Endothelial cell of umbilical vein (primary cell): ENCODE measurements at regions of chr1 and their contacts with region 1.

Region 1: DNA sequence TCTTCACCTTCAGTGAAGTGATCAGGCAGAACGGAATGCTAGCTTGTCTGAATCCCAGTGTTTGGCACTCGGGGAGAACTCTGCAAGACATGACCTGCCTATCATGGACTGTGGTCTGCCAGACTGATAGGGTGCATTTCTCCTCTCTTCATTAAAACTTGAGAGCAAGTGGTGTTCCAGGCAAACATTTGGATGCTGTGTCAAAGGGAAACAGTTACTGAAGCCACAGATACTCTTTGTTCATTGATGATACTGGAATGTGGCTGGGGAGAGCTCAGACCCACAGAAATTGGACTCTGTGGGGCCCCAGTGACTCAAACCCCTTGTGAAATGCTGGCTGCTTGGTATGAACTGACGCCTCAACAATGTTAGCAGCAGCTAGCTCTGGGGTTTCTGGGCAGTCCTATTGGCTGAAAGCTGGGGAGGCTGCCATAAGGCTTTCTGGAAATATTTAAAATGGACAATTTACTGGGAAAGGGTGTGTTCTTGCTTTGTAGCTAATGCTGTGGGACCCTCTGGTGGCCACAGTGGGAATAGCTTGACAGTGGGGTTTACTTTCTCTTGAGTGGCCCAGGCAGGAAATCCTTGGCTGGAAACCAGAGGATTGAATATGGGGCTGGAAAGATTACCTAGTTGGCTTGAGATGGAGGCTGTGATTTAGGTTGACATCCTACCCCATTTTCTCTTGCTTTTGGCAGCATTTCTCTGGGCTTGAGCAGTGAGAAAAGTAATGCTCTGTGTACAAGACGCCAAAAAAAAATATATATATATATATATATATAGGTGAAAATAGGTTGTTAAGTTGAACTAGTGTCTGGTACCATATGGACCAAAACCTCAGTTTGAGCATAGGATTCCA is 8.0 kb upstream of the S100A10 start:
- DNase-seq: peak; percentile 87
- H3K4me3 ChIP-seq: no peak overlapping the region
- H3K27ac ChIP-seq: no peak overlapping the region
- H3K4me1 ChIP-seq: no peaks in the 10 kb centered on the region
- H3K27me3 ChIP-seq: peaks cover 24 to 32% of the 10 kb centered on the region in 2 experiments
- CTCF ChIP-seq: peak; percentile 89 to 91
- POLR2A ChIP-seq: no peak

Region 2: GRCh38 chr1:151881456-151881855 is 120.2 kb before region 1 on chr1:
- CTCF ChIA-PET with region 1: interaction called, 128 read pairs
- POLR2A ChIA-PET with region 1: no interaction called
- dilution Hi-C with region 1: no loop called
- intact Hi-C with region 1: no loop called
- DNase-seq: peak; percentile 35
- H3K4me3 ChIP-seq: no peak overlapping the region
- H3K27ac ChIP-seq: no peak overlapping the region
- H3K4me1 ChIP-seq: peaks cover 1% of the 10 kb centered on the region
- H3K27me3 ChIP-seq: no peaks in the 10 kb centered on the region
- CTCF ChIP-seq: no peak
- POLR2A ChIP-seq: no peak

Region 3: GRCh38 chr1:151909150-151910149 is 92.2 kb before region 1 on chr1 and contains the start of gene THEM4:
- CTCF ChIA-PET with region 1: interaction called, 21 read pairs
- POLR2A ChIA-PET with region 1: interaction called, 3 read pairs
- dilution Hi-C with region 1: loop called (anchors 25 kb)
- intact Hi-C with region 1: no loop called
- DNase-seq: peak; percentile 93
- H3K4me3 ChIP-seq: peak within 1 kb of the TSS; percentile 48 to 72 (median 50)
- H3K27ac ChIP-seq: peak within 1 kb of the TSS; percentile 65
- H3K4me1 ChIP-seq: peaks cover 27% of the 10 kb centered on the region
- H3K27me3 ChIP-seq: peaks cover 2 to 7% of the 10 kb centered on the region in 2 experiments
- CTCF ChIP-seq: peak; percentile 25 to 46
- POLR2A ChIP-seq: peak; percentile 87
- total RNA-seq, gene THEM4: 22.1 and 24.9 TPM in 2 replicates

Region 4: DNA sequence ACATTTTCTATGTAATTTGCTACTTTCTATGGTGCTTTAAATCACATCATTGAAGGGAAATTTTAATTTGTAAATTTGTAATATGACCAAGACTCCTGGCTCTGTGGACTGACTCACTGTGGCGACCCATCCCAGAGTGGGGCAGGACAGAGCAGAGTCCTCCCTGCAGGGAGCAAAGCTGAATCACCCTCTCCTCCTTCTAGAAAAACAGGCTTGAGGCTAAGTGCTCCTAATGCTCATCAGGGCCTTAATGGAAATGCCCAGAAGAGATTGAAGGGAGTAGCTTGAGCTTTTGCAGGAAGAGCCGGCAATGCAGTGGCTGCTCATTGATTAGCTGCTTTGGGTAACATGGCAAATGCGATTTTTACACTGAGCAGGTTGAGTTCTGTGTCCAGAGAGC is 24.8 kb before region 1 on chr1:
- CTCF ChIA-PET with region 1: interaction called, 11 read pairs
- POLR2A ChIA-PET with region 1: no interaction called
- dilution Hi-C with region 1: no loop called
- intact Hi-C with region 1: no loop called
- DNase-seq: no peak
- H3K4me3 ChIP-seq: no peak overlapping the region
- H3K27ac ChIP-seq: no peak overlapping the region
- H3K4me1 ChIP-seq: peaks cover 30% of the 10 kb centered on the region
- H3K27me3 ChIP-seq: no peaks in the 10 kb centered on the region
- CTCF ChIP-seq: no peak
- POLR2A ChIP-seq: no peak

Region 5: GRCh38 chr1:152034646-152035405 is 33.2 kb after region 1 on chr1:
- CTCF ChIA-PET with region 1: interaction called, 13 read pairs
- POLR2A ChIA-PET with region 1: no interaction called
- dilution Hi-C with region 1: no loop called
- intact Hi-C with region 1: no loop called
- DNase-seq: peak; percentile 60
- H3K4me3 ChIP-seq: peak overlapping the region; percentile 55 to 99 (median 98)
- H3K27ac ChIP-seq: peak overlapping the region; percentile 81
- H3K4me1 ChIP-seq: peaks cover 21% of the 10 kb centered on the region
- H3K27me3 ChIP-seq: peaks cover 6 to 9% of the 10 kb centered on the region in 2 experiments
- CTCF ChIP-seq: peak; percentile 66 to 74
- POLR2A ChIP-seq: peak; percentile 25